ENCODE measurements at regions of chr5 and their contacts with region 1.

Region 1: GRCh38 chr5:134738133-134738962 is at the start of gene CAMLG:
- DNase-seq: peak; percentile 99
- H3K4me3 Mint-ChIP-seq: peak within 1 kb of the TSS; percentile 93
- H3K27ac Mint-ChIP-seq: peak within 1 kb of the TSS; percentile 89
- H3K4me1 Mint-ChIP-seq: peaks cover 8% of the 10 kb centered on the region
- H3K27me3 Mint-ChIP-seq: no peaks in the 10 kb centered on the region
- CTCF ChIP-seq: peak; percentile 82
- total RNA-seq, gene CAMLG: 21.7 and 22.8 TPM in 2 replicates

Region 2: DNA sequence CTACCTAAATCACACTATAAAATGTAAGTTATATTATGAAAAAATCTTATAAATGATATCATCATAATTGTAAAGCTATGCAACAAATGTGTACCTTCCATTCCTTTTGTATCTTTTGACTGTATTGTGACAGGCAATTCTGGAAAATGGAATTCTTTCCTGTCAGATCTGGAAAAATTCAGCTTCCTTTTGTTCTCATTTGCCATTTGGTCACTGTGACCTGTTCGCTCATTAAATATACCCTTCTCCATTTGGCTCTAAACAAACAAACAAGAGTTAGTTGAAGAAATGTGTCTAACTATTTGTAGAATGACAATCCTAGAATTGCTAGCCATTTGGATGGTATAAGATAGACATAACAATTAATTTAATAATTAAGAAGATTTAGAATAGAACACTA is 434.0 kb before region 1 on chr5:
- CTCF ChIA-PET with region 1: no interaction called
- intact Hi-C with region 1: loop called (anchors 2 kb)
- DNase-seq: no peak
- H3K4me3 Mint-ChIP-seq: no peak overlapping the region
- H3K27ac Mint-ChIP-seq: no peak overlapping the region
- H3K4me1 Mint-ChIP-seq: peaks cover 6% of the 10 kb centered on the region
- H3K27me3 Mint-ChIP-seq: no peaks in the 10 kb centered on the region
- CTCF ChIP-seq: no peak

Region 3: DNA sequence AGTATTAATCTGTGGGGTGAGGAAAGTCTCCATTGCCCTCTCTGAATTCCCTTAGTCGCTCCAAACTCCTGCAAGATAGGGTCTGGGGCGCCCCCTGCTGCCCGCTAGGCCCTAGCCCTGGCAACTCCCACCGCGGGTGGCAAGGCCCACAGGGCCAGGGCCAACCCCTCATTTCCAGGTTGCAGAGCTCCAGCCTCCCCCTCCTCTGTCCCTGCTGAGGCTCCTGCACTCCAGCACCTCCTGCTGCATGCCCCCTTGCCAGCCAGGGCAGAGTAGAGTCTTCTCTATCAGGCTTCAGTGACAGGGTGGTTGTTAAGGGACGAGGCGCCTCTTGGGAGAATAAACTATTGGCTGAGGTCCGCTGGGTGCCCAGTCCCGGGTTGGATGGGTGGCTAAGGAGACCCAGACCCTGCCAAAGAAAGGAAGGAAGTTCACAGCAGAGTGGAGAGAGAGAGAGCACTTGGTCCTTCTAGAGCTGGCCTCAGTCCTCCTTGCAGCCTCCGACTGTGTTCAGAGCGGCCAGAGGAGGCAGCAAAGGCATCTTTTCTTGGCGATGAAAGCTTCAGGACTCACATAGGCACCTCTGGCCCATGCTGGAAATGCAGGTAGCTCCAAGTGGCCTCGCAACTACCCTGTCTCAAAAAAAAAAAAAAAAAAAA is 151.4 kb before region 1 on chr5:
- CTCF ChIA-PET with region 1: interaction called, 28 read pairs
- intact Hi-C with region 1: loop called (anchors 5 kb)
- DNase-seq: peak; percentile 97
- H3K4me3 Mint-ChIP-seq: peak overlapping the region; percentile 26
- H3K27ac Mint-ChIP-seq: no peak overlapping the region
- H3K4me1 Mint-ChIP-seq: peaks cover 29% of the 10 kb centered on the region
- H3K27me3 Mint-ChIP-seq: no peaks in the 10 kb centered on the region
- CTCF ChIP-seq: peak; percentile 90

Region 4: DNA sequence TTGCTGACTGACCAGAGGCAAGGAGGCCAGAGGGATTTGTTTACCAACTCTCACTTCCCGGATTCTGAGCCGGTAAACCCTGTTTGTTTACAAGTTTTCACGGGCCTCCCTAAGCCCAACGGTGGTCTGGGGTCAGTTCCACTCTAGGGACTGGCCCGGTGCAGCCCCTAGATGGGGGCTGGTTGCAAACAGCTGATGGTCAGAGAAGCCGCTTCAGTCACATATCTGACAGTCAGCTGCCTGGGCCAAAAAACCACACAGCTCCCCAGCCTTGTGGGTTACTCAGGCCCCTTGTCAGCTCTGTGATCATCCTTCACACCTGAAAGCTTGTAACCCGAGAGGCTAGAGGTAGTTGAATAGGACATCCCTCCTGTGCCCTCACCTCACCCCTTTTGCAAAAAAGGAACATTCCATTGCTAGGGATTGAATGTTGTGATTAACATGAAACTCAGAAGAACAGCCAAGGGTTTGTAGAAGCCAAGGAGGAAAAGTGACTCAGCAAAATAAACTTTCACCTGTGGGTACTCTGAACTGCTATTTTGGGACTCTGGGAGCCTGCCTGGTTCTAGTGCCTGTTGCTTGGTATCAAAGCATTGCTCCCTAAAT is 146.1 kb before region 1 on chr5:
- CTCF ChIA-PET with region 1: interaction called, 28 read pairs
- intact Hi-C with region 1: loop called (anchors 5 kb)
- DNase-seq: peak; percentile 23
- H3K4me3 Mint-ChIP-seq: peak overlapping the region; percentile 5
- H3K27ac Mint-ChIP-seq: peak overlapping the region; percentile 68
- H3K4me1 Mint-ChIP-seq: peaks cover 31% of the 10 kb centered on the region
- H3K27me3 Mint-ChIP-seq: no peaks in the 10 kb centered on the region
- CTCF ChIP-seq: no peak

Region 5: DNA sequence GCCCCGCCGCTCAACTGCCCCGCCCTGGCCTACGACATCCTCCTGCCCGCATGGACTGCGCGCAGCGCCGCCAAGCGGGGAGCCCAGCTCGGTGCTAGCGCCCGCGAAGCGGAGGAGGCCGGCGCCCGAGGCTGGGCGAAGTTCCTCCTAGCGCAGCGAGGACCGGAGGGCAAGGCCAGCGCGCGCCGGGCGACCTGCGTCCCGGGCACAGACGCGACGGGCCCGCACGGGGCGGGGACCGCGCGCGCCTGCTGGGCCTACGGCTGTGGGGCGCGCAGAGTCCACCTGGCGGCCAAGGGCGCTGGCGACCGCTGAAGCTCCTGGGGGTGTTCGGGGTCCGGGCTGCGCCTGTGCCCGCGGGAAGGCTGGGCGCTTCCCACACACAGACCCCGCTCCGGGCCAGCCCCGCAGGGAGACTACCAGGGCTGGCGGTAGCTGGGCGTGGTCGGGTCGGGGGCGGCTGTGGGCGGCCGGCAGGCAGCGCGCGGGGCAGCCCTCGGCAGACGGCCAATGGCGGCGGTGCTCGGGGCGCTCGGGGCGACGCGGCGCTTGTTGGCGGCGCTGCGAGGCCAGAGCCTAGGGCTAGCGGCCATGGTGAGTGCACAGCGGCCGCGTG is 166.4 kb after region 1 on chr5 and contains the start of gene PCBD2:
- CTCF ChIA-PET with region 1: interaction called, 8 read pairs
- intact Hi-C with region 1: loop called (anchors 10 kb)
- DNase-seq: peak; percentile 99
- H3K4me3 Mint-ChIP-seq: peak within 1 kb of the TSS; percentile 82
- H3K27ac Mint-ChIP-seq: peak within 1 kb of the TSS; percentile 92
- H3K4me1 Mint-ChIP-seq: no peaks in the 10 kb centered on the region
- H3K27me3 Mint-ChIP-seq: no peaks in the 10 kb centered on the region
- CTCF ChIP-seq: peak; percentile 96
- total RNA-seq, gene PCBD2: 18.1 and 18.8 TPM in 2 replicates

Region 6: DNA sequence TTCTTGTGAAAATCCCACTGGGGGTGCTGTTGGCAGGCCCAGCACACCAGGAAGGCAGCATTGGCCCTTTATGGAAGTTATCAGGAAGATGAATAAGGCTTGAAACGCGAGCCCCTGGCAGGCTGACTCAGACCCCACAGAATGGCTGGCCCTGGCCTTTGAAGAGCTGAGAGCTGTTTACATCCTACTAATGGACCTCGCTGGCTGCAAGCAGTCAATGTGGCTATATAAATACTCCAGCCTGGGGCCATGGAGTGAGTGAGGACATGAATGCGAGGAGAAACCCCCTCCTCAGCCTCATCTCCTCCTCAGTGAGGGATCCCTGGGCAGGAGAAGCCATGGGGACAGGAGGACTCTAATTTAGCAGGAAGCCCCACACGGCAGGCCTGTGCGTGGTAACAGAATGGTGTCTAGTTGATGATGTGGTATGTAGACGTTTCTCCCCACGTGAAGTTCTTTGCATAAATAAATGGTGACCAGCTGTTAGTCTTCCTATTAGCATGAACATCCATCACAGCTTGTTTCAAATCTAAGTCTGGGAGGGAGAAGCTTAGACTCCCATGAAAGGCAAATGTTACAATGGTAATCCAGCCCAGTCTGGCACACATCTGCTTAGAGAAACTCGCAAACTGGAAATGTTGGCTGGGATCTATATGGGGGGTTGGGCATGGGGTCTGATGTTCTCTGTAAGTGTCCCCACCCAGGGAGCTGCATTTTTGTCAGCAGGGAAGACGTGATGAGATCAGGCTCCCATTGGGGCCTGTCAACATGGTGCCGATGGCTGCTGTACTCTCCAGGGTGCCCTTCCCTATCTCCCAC is 470.8 kb after region 1 on chr5:
- CTCF ChIA-PET with region 1: no interaction called
- intact Hi-C with region 1: loop called (anchors 10 kb)
- DNase-seq: peak; percentile 68
- H3K4me3 Mint-ChIP-seq: no peak overlapping the region
- H3K27ac Mint-ChIP-seq: no peak overlapping the region
- H3K4me1 Mint-ChIP-seq: peaks cover 16% of the 10 kb centered on the region
- H3K27me3 Mint-ChIP-seq: peaks cover 28% of the 10 kb centered on the region
- CTCF ChIP-seq: no peak

Region 7: GRCh38 chr5:135251093-135251492 is 512.7 kb after region 1 on chr5:
- CTCF ChIA-PET with region 1: no interaction called
- intact Hi-C with region 1: no loop called
- DNase-seq: no peak
- H3K4me3 Mint-ChIP-seq: no peak overlapping the region
- H3K27ac Mint-ChIP-seq: no peak overlapping the region
- H3K4me1 Mint-ChIP-seq: peaks cover 16% of the 10 kb centered on the region
- H3K27me3 Mint-ChIP-seq: no peaks in the 10 kb centered on the region
- CTCF ChIP-seq: no peak